Stomach (tissue), 19 donors: ENCODE measurements at regions of chr7 and their contacts with region 1.

Region 1: GRCh38 chr7:992709-993607 is 10.0 kb downstream of the CYP2W1 start:
- DNase-seq: peak; percentile 96 to 99
- H3K4me3 ChIP-seq: no peak overlapping the region
- H3K27ac ChIP-seq: no peak overlapping the region
- H3K4me1 ChIP-seq: peaks cover 9 to 24% (median 22%) of the 10 kb centered on the region in 4 donors
- H3K27me3 ChIP-seq: peaks cover 0 to 27% (median 12%) of the 10 kb centered on the region in 3 donors
- CTCF ChIP-seq: peak in 5 of 7 experiments; percentile 99 to 100 (median 99)
- EP300 ChIP-seq: no peak
- POLR2A ChIP-seq: no peak

Region 2: DNA sequence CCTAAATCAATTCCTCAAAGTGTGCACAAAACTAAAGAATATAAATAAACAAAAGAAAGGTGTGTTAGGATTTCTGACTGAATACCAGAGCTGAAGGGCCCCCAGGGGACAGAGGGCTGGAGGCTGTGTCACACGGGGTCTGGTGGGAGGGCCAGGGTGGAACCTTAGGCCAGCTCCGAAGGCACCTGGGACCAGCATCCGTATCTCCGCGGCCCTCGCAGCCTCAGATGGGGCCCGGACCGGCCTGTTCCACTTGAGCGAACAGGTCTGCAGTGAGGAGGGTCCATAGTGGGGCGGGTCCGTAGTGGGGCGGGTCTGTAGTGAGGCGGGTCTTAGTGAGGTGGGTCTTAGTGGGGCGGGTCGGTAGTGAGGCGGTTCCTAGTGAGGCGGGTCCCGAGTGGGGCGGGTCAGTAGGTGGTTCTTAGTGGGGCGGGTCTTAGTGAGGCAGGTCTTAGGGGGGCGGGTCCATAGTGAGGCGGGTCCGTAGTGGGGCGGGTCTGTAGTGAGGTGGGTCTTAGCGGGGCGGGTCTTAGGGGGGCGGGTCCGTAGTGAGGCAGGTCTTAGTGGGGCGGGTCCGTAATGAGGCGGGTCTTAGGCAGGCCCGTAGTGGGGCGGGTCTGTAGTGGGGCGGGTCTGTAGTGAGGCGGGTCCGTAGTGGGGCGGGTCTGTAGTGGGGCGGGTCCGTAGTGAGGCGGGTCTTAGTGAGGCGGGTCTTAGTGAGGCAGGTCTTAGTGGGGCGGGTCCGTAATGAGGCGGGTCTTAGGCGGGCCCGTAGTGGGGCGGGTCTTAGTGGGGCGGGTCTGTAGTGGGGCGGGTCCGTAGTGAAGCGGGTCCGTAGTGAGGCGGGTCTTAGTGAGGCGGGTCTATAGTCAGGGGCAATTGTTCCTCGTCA is 66.5 kb after region 1 on chr7:
- intact Hi-C with region 1: loop called (anchors 5 kb)
- DNase-seq: peak; percentile 74 to 91
- H3K4me3 ChIP-seq: peak overlapping the region in 1 of 4 donors; percentile 6
- H3K27ac ChIP-seq: peak overlapping the region; percentile 63 to 80 (median 71)
- H3K4me1 ChIP-seq: peaks cover 36 to 59% (median 56%) of the 10 kb centered on the region in 4 donors
- H3K27me3 ChIP-seq: no peaks in the 10 kb centered on the region
- CTCF ChIP-seq: no peak
- EP300 ChIP-seq: no peak
- POLR2A ChIP-seq: no peak

Region 3: GRCh38 chr7:1159891-1160668 is 167.1 kb after region 1 on chr7 and contains the start of gene ZFAND2A:
- intact Hi-C with region 1: loop called (anchors 10 kb)
- DNase-seq: peak; percentile 99
- H3K4me3 ChIP-seq: peak within 1 kb of the TSS; percentile 76 to 97 (median 95)
- H3K27ac ChIP-seq: peak within 1 kb of the TSS; percentile 93 to 99 (median 97)
- H3K4me1 ChIP-seq: peaks cover 23 to 49% (median 44%) of the 10 kb centered on the region in 4 donors
- H3K27me3 ChIP-seq: no peaks in the 10 kb centered on the region
- CTCF ChIP-seq: no peak
- EP300 ChIP-seq: no peak
- POLR2A ChIP-seq: peak in 2 of 4 donors; percentile 49 to 52
- total RNA-seq, gene ZFAND2A: 0.89 to 44.9 (median 20.2) TPM

Region 4: GRCh38 chr7:1247527-1248059 is 254.6 kb after region 1 on chr7:
- intact Hi-C with region 1: no loop called
- DNase-seq: peak in 1 of 2 donors; percentile 73
- H3K4me3 ChIP-seq: peak overlapping the region in 1 of 4 donors; percentile 6
- H3K27ac ChIP-seq: no peak overlapping the region
- H3K4me1 ChIP-seq: peaks cover 17 to 35% (median 26%) of the 10 kb centered on the region in 4 donors
- H3K27me3 ChIP-seq: peaks cover 61 to 100% (median 100%) of the 10 kb centered on the region in 3 donors
- CTCF ChIP-seq: no peak
- EP300 ChIP-seq: no peak
- POLR2A ChIP-seq: no peak